IMR-90 (cell line): ENCODE measurements at regions of chr3 and their contacts with region 1.

Region 1: GRCh38 chr3:156382458-156383346 is 172.2 kb downstream of the SSR3 start:
- DNase-seq: peak; percentile 41
- ATAC-seq: peak; percentile 65
- H3K4me3 ChIP-seq: no peak overlapping the region
- H3K27ac ChIP-seq: no peak overlapping the region
- H3K4me1 ChIP-seq: no peaks in the 10 kb centered on the region
- H3K27me3 ChIP-seq: peaks cover 27% of the 10 kb centered on the region
- CTCF ChIP-seq: peak; percentile 72
- POLR2A ChIP-seq: no peak
- RAD21 ChIP-seq: peak; percentile 77

Region 2: GRCh38 chr3:155995525-155996351 is 387.0 kb before region 1 on chr3:
- CTCF ChIA-PET with region 1: no interaction called
- POLR2A ChIA-PET with region 1: no interaction called
- dilution Hi-C with region 1: no loop called
- in situ Hi-C with region 1: no loop called
- intact Hi-C with region 1: loop called (anchors 5 kb)
- DNase-seq: peak; percentile 72
- ATAC-seq: peak; percentile 95
- H3K4me3 ChIP-seq: no peak overlapping the region
- H3K27ac ChIP-seq: no peak overlapping the region
- H3K4me1 ChIP-seq: 0 out of 2 replicates have a peak, but pooled peaks cover 2% of the 10 kb centered on the region
- H3K27me3 ChIP-seq: no peaks in the 10 kb centered on the region
- CTCF ChIP-seq: peak; percentile 68
- POLR2A ChIP-seq: no peak
- RAD21 ChIP-seq: peak; percentile 64

Region 3: DNA sequence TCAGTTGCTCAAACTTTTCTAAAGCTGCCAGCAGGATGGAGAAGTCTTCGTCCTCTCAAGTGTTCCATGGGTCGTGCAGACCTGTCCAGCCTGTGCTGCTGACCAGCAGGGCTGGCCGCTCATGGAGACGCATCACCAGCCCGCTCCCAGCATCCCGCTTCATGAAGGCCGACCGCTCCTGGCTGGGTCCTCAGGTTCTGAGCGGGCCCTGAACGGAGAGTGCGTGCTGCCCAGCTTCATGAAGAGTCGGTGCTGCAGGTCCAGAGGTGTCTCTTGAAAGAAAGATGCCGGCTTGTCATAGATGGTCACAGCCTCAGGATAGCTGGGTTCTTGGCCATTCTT is 338.1 kb before region 1 on chr3:
- CTCF ChIA-PET with region 1: no interaction called
- POLR2A ChIA-PET with region 1: no interaction called
- dilution Hi-C with region 1: no loop called
- in situ Hi-C with region 1: no loop called
- intact Hi-C with region 1: loop called (anchors 2 kb)
- DNase-seq: no peak
- ATAC-seq: no peak
- H3K4me3 ChIP-seq: no peak overlapping the region
- H3K27ac ChIP-seq: no peak overlapping the region
- H3K4me1 ChIP-seq: no peaks in the 10 kb centered on the region
- H3K27me3 ChIP-seq: no peaks in the 10 kb centered on the region
- CTCF ChIP-seq: no peak
- POLR2A ChIP-seq: no peak
- RAD21 ChIP-seq: no peak

Region 4: DNA sequence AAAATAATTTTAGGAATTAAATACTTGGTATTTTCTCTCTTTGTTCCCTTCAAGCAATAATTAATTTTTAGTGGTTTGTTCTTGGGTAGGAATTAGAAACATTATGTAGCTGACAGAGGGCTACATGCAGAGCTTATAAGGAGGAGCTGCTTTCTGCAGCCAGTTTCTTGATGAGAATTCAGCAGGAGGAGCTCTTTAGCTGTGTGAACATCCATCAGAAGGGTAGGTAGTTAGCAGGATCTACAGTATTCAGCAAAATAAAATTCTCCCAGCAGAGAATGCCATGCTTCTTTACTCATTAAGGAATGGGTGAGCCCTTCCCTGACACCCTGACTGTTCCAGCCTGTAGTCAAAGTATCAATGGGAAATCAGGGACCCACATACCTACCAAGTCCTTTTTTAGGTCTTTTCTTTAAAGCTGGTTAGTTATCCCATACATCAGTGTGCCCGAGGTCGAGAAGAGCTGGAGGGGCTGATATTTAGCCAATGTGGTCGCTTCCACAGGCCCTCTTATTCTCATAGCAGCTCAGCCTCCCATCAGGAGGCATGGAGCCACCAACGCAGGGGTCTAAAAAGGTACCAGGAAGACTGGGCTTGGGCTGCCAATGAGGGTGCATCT is 208.4 kb before region 1 on chr3:
- CTCF ChIA-PET with region 1: interaction called, 9 read pairs
- POLR2A ChIA-PET with region 1: no interaction called
- dilution Hi-C with region 1: no loop called
- in situ Hi-C with region 1: no loop called
- intact Hi-C with region 1: loop called (anchors 1 kb)
- DNase-seq: peak; percentile 66
- ATAC-seq: peak; percentile 79
- H3K4me3 ChIP-seq: no peak overlapping the region
- H3K27ac ChIP-seq: no peak overlapping the region
- H3K4me1 ChIP-seq: no peaks in the 10 kb centered on the region
- H3K27me3 ChIP-seq: peaks cover 5% of the 10 kb centered on the region
- CTCF ChIP-seq: peak; percentile 64
- POLR2A ChIP-seq: no peak
- RAD21 ChIP-seq: peak; percentile 83

Region 5: DNA sequence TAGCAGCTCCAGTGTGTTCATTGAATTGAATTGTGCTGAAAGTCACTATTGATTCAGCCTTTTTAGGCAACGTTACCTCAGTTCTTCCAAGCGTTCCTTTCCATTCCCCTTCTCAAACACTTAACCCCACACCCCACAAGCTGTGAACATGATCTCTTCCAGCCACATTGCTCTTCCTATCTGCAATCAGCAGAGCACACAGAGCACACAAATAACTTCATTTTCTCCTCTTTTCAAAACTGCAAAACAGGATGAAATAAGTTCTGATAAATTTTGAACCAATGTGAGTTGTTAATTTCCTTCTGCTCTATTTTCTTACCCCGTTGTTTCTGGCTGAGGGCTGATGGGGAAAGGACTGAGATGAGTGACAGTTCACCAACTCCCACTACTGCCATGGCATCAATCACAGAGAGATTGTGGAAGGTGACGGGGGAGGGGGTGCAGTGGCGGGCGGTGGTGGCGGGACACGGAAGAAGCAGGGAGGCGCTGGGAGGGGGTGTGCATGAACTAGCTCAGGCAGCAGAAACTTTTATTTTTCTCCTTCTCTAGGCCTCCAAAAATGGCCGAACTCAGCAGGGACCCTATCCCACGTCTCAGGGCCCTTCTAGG is 25.0 kb after region 1 on chr3:
- CTCF ChIA-PET with region 1: no interaction called
- POLR2A ChIA-PET with region 1: no interaction called
- dilution Hi-C with region 1: no loop called
- in situ Hi-C with region 1: no loop called
- intact Hi-C with region 1: no loop called
- DNase-seq: no peak
- ATAC-seq: no peak
- H3K4me3 ChIP-seq: no peak overlapping the region
- H3K27ac ChIP-seq: no peak overlapping the region
- H3K4me1 ChIP-seq: no peaks in the 10 kb centered on the region
- H3K27me3 ChIP-seq: peaks cover 7% of the 10 kb centered on the region
- CTCF ChIP-seq: no peak
- POLR2A ChIP-seq: no peak
- RAD21 ChIP-seq: no peak

Region 6: GRCh38 chr3:156509189-156510174 is 126.8 kb after region 1 on chr3:
- CTCF ChIA-PET with region 1: interaction called, 3 read pairs
- POLR2A ChIA-PET with region 1: no interaction called
- dilution Hi-C with region 1: no loop called
- in situ Hi-C with region 1: no loop called
- intact Hi-C with region 1: loop called (anchors 1 kb)
- DNase-seq: peak; percentile 66
- ATAC-seq: peak; percentile 91
- H3K4me3 ChIP-seq: no peak overlapping the region
- H3K27ac ChIP-seq: no peak overlapping the region
- H3K4me1 ChIP-seq: 0 out of 2 replicates have a peak, but pooled peaks cover 2% of the 10 kb centered on the region
- H3K27me3 ChIP-seq: peaks cover 12% of the 10 kb centered on the region
- CTCF ChIP-seq: peak; percentile 67
- POLR2A ChIP-seq: no peak
- RAD21 ChIP-seq: peak; percentile 74

Region 7: GRCh38 chr3:157130467-157131251 is 748.0 kb after region 1 on chr3:
- CTCF ChIA-PET with region 1: interaction called, 3 read pairs
- POLR2A ChIA-PET with region 1: no interaction called
- dilution Hi-C with region 1: no loop called
- in situ Hi-C with region 1: no loop called
- intact Hi-C with region 1: loop called (anchors 10 kb)
- DNase-seq: peak; percentile 64
- ATAC-seq: no peak
- H3K4me3 ChIP-seq: no peak overlapping the region
- H3K27ac ChIP-seq: 0 out of 2 replicates have a peak overlapping the region, but pooled peaks have one; percentile 10
- H3K4me1 ChIP-seq: peaks cover 35% of the 10 kb centered on the region
- H3K27me3 ChIP-seq: no peaks in the 10 kb centered on the region
- CTCF ChIP-seq: peak; percentile 74
- POLR2A ChIP-seq: no peak
- RAD21 ChIP-seq: peak; percentile 76